CD14-positive monocyte (primary cell): ENCODE measurements at regions of chr16 and their contacts with region 1.

Region 1: DNA sequence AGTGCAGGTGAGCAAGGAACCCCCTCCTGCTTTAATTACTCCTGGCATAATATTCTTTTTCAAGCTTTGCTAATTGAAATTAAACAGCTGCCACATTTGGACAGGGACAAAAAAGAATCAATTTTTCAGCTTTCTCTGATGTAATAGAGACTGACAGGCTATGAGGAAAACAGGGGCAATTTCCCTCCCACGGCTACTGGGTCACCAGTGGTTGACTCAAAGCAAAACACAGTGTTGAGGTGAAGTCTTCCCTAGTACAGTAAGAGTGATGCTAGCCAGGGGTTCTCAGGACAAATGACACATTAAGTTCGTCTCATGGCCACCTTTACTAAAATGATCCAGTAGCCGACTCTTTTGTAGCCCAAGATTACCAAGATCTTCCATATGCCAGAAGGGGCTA is 38.6 kb upstream of the PMFBP1 start:
- DNase-seq: no peak
- H3K4me3 ChIP-seq: no peak overlapping the region
- H3K4me3 Mint-ChIP-seq: no peak overlapping the region
- H3K27ac ChIP-seq: no peak overlapping the region
- H3K27ac Mint-ChIP-seq: peak overlapping the region in 1 of 7 donors; percentile 76
- H3K4me1 ChIP-seq: no peaks in the 10 kb centered on the region
- H3K4me1 Mint-ChIP-seq: peaks cover 12% of the 10 kb centered on the region
- H3K27me3 ChIP-seq: no peaks in the 10 kb centered on the region
- H3K27me3 Mint-ChIP-seq: no peaks in the 10 kb centered on the region
- CTCF ChIP-seq: no peak

Region 2: GRCh38 chr16:72162105-72162692 is 48.4 kb before region 1 on chr16:
- intact Hi-C with region 1: loop called in 1 of 2 experiments (anchors 10 kb)
- DNase-seq: no peak
- H3K4me3 ChIP-seq: no peak overlapping the region
- H3K4me3 Mint-ChIP-seq: no peak overlapping the region
- H3K27ac ChIP-seq: no peak overlapping the region
- H3K27ac Mint-ChIP-seq: peak overlapping the region in 1 of 7 donors; percentile 37
- H3K4me1 ChIP-seq: no peaks in the 10 kb centered on the region
- H3K4me1 Mint-ChIP-seq: peaks cover 8% of the 10 kb centered on the region
- H3K27me3 ChIP-seq: no peaks in the 10 kb centered on the region
- H3K27me3 Mint-ChIP-seq: peaks cover 0 to 1% (median 0%) of the 10 kb centered on the region in 3 donors
- CTCF ChIP-seq: no peak